GM12878 (cell line): ENCODE measurements at regions of chr7 and their contacts with region 1.

Region 1: GRCh38 chr7:30556840-30557239 is 37.8 kb upstream of the GARS1 start:
- DNase-seq: no peak
- ATAC-seq: no peak
- H3K4me3 ChIP-seq: no peak overlapping the region
- H3K27ac ChIP-seq: no peak overlapping the region
- H3K4me1 ChIP-seq: no peaks in the 10 kb centered on the region; the same call in 1 of the 2 replicates
- H3K27me3 ChIP-seq: no peaks in the 10 kb centered on the region
- CTCF ChIP-seq: no peak
- EP300 ChIP-seq: no peak
- POLR2A ChIP-seq: no peak
- RAD21 ChIP-seq: no peak

Region 2: GRCh38 chr7:29265208-29265923 is 1291.5 kb before region 1 on chr7:
- CTCF ChIA-PET with region 1: no interaction called
- POLR2A ChIA-PET with region 1: no interaction called
- RAD21 ChIA-PET with region 1: no interaction called
- SMC1A ChIA-PET with region 1: no interaction called
- in situ Hi-C with region 1: no loop called
- intact Hi-C with region 1: no loop called
- DNase-seq: no peak
- ATAC-seq: peak; percentile 82
- H3K4me3 ChIP-seq: no peak overlapping the region
- H3K27ac ChIP-seq: no peak overlapping the region
- H3K4me1 ChIP-seq: no peaks in the 10 kb centered on the region
- H3K27me3 ChIP-seq: no peaks in the 10 kb centered on the region
- CTCF ChIP-seq: no peak
- EP300 ChIP-seq: no peak
- POLR2A ChIP-seq: no peak
- RAD21 ChIP-seq: no peak

Region 3: GRCh38 chr7:30268586-30268985 is 288.3 kb before region 1 on chr7:
- CTCF ChIA-PET with region 1: interaction called, 115 read pairs
- POLR2A ChIA-PET with region 1: no interaction called
- RAD21 ChIA-PET with region 1: interaction called, 78 read pairs
- SMC1A ChIA-PET with region 1: interaction called, 96 read pairs
- in situ Hi-C with region 1: loop called (anchors 5 kb)
- intact Hi-C with region 1: no loop called
- DNase-seq: no peak
- ATAC-seq: no peak
- H3K4me3 ChIP-seq: no peak overlapping the region
- H3K27ac ChIP-seq: no peak overlapping the region
- H3K4me1 ChIP-seq: no peaks in the 10 kb centered on the region
- H3K27me3 ChIP-seq: no peaks in the 10 kb centered on the region
- CTCF ChIP-seq: no peak
- EP300 ChIP-seq: no peak
- POLR2A ChIP-seq: no peak
- RAD21 ChIP-seq: no peak

Region 4: DNA sequence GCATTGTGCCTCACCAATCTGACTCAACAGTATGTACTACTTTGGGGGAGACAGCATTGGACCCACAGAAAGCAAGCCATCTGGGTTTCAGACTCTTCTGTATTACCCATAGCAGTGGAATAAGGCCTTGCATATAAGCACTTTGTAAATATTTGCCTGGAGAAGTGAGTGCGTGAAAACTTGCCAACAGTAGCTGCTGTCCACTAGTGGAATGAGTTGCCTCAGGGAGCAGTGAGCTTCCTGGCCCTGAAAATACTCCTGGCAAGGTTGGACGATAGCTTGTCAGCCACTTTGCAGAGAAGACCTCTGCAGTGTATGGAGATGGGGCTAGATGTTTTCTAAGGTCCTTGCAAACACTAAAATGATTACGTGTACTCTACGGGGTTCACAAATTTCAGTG is 59.5 kb after region 1 on chr7:
- CTCF ChIA-PET with region 1: no interaction called
- POLR2A ChIA-PET with region 1: no interaction called
- RAD21 ChIA-PET with region 1: no interaction called
- SMC1A ChIA-PET with region 1: no interaction called
- in situ Hi-C with region 1: no loop called
- intact Hi-C with region 1: no loop called
- DNase-seq: no peak
- ATAC-seq: no peak
- H3K4me3 ChIP-seq: no peak overlapping the region
- H3K27ac ChIP-seq: no peak overlapping the region
- H3K4me1 ChIP-seq: no peaks in the 10 kb centered on the region
- H3K27me3 ChIP-seq: no peaks in the 10 kb centered on the region
- CTCF ChIP-seq: no peak
- EP300 ChIP-seq: no peak
- POLR2A ChIP-seq: no peak
- RAD21 ChIP-seq: no peak